ENCODE measurements at regions of chr9 and their contacts with region 1.

Region 1: DNA sequence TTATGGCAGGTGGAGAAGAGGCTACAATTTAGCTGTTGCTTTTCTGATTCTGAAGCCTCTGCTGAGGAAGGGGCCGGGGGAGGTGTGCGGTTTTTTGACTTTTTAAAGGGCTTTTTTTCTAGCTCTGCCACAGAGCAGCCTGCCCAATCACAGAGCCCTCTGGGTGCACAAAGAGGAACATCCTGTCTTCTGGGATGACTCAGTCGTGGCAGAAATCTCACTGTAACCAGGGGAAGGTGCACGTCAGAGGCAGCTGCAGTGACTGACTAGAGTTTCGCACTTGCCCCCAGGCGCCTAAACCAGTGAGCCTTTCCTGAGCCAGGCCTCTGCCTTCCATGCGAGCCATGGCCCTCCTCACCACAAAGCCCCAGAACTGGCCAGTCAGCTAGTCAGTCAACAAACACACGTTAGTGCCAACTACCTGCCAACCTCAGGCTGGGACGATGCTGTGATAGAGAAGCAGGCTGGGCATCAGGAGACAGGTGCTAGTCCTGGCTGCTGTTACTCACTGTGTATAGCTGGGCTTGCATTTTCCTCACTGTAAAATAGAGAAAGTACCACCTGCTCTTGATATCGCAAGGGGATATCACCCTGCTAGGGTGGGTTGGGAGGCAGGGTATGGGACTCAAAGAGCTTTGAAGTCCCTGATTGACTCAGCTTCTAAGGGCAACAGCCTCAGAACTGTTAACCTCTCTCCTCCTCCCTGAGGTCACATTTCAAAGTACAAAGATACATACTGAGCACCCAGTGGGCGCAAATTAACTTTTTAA is 2.2 kb downstream of the AKNA start:
- DNase-seq: peak; percentile 97
- H3K4me3 Mint-ChIP-seq: peak overlapping the region; percentile 96
- H3K27ac Mint-ChIP-seq: peak overlapping the region; percentile 93
- H3K4me1 Mint-ChIP-seq: peaks cover 61% of the 10 kb centered on the region
- H3K27me3 Mint-ChIP-seq: no peaks in the 10 kb centered on the region

Region 2: DNA sequence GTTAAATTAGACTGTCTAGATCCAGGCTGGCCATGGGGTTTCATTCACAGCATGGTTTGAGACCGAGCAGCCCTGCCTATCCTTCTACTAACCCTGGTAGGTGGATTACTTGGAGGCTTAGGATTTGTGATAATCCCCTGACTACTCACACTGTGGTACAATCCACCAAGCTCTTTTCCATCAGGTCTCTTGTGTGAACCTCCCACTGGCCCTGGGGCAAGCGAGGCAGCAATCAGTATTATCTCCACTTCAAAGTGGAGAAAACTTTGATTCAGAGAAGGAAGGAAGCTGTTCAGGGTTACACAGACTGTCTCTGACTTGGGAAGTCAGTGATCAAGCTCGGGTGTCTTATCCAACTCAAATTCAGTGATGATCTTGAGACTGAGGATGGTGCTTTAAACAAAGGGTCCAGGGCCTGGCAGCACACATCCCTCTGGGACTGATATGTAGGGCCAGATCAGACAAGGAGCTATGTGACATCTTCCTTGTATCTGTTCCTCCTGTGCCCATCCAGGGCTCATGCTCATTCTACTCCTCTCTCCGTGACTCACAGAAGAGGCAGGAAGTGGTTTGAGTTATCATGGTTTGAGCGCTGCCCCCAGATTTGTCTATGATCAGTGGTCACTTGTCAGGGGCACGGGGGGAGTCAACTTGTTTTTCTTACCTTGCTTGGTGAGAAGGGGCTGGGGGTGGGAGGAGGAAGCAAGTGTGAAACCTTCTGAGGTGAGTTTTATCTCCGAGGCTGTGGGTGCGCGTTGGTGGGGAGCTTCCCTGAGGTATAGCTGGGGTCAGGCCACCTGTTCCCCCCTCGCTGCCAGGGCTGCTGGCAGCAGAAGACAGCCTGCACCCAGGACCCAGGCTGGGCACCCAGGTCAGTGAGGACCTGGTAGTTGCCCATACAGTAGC is 873.5 kb before region 1 on chr9:
- intact Hi-C with region 1: loop called (anchors 10 kb)
- DNase-seq: peak; percentile 89
- H3K4me3 Mint-ChIP-seq: peak overlapping the region; percentile 74
- H3K27ac Mint-ChIP-seq: peak overlapping the region; percentile 96
- H3K4me1 Mint-ChIP-seq: peaks cover 64% of the 10 kb centered on the region
- H3K27me3 Mint-ChIP-seq: no peaks in the 10 kb centered on the region

Region 3: DNA sequence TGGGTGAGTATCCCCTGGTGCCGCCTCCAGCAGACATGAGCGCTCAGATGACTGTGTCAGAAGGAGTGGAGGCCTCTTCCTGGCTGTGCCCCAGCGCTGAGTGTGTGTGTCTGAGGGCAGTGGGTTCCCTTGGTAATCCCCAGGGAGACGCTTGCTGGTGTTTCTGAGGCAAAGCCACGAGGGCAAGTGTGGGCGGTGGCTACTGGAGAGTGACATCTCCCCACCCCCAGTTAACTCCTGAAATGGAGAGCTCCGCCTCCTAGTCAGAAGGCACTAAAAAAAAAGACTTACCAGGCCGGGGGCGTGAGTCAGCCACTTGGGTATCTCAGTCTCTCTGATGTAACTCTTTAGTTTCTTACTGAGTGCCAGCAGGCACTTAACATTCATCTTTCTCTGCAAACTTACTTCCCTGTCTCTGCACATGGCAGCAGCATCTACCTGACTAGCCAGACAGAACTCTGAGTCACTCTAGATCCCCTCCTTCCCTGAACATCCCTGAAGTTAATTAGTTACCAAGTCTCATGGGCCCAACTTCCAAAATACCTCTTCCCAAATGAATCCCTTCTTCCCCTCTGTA is 36.6 kb before region 1 on chr9:
- intact Hi-C with region 1: loop called (anchors 1 kb)
- DNase-seq: peak; percentile 87
- H3K4me3 Mint-ChIP-seq: peak overlapping the region; percentile 58
- H3K27ac Mint-ChIP-seq: peak overlapping the region; percentile 99
- H3K4me1 Mint-ChIP-seq: peaks cover 51% of the 10 kb centered on the region
- H3K27me3 Mint-ChIP-seq: no peaks in the 10 kb centered on the region

Region 4: GRCh38 chr9:114397848-114398605 is 12.4 kb after region 1 on chr9:
- intact Hi-C with region 1: loop called (anchors 1 kb)
- DNase-seq: peak; percentile 99
- H3K4me3 Mint-ChIP-seq: peak overlapping the region; percentile 97
- H3K27ac Mint-ChIP-seq: peak overlapping the region; percentile 87
- H3K4me1 Mint-ChIP-seq: peaks cover 33% of the 10 kb centered on the region
- H3K27me3 Mint-ChIP-seq: no peaks in the 10 kb centered on the region

Region 5: GRCh38 chr9:114718801-114719221 is 333.2 kb after region 1 on chr9:
- intact Hi-C with region 1: loop called (anchors 5 kb)
- DNase-seq: peak; percentile 98
- H3K4me3 Mint-ChIP-seq: peak overlapping the region; percentile 74
- H3K27ac Mint-ChIP-seq: peak overlapping the region; percentile 97
- H3K4me1 Mint-ChIP-seq: peaks cover 81% of the 10 kb centered on the region
- H3K27me3 Mint-ChIP-seq: no peaks in the 10 kb centered on the region

Region 6: DNA sequence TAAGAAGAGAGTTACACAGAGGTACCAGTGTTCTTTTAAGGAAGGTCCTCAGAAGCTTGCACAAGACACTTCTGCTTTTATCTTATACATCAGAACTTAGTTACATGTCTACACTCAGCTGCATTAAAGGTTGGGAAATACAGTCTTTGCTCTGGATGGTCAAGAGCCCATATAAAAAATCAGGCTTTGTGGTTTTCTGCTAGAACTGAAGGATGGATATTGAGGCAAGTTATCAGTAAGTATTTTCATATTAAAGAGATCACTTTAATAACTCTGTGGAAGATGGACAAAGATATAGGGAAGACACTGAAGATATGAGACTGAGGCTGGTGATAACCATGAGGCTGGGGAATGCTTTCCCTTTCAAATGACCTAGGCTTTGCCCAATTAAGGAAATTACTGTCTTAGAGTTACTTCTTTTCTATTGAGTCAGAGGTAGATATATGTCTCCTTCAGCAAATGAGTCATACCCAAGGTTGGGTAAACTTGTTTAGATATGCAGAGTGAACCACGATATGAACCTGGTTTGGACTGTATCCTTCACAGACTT is 819.4 kb after region 1 on chr9:
- intact Hi-C with region 1: loop called (anchors 10 kb)
- DNase-seq: no peak
- H3K4me3 Mint-ChIP-seq: no peak overlapping the region
- H3K27ac Mint-ChIP-seq: peak overlapping the region; percentile 51
- H3K4me1 Mint-ChIP-seq: peaks cover 37% of the 10 kb centered on the region
- H3K27me3 Mint-ChIP-seq: peaks cover 14% of the 10 kb centered on the region

Measured in activated CD4-positive, alpha-beta T cell treated with anti-CD3 and anti-CD28 coated beads, Interleukin-2, amount 10 ng/mL, durations not matched to agents 24 days and 14 days (primary cell).